ENCODE measurements at regions of chr16 and their contacts with region 1.

Region 1: GRCh38 chr16:26826500-26826899 is 240.2 kb upstream of the C16orf82 start:
- DNase-seq: no peak

Region 2: DNA sequence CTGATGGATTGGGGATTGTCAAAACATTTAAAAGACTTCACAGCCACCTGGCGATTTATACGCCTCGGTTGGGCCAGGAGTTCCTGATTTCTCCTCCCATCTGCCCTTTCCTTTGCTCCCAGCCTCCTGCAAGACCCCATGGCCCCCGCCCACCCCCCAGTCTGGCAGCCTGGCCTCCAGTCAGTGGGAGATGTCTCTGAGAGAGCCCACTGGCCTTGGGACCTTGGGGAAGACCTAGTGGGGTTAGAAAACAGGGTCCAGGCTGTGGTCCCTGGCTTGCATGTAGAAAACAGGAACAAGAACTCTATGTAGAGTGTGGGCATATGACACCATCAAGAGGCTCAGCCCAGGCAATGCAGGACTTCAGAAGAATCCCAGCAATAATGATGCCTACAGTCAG is 30.9 kb after region 1 on chr16:
- intact Hi-C with region 1: no loop called
- DNase-seq: no peak

Region 3: GRCh38 chr16:27118526-27118925 is 292.0 kb after region 1 on chr16:
- intact Hi-C with region 1: loop called in 1 of 2 experiments (anchors 5 kb)
- DNase-seq: no peak

Measured in posterior vena cava (tissue), 2 donors.